Dendritic cell treated with granulocyte-macrophage colony-stimulating factor and Interleukin-4, amounts not matched to agents 40 ng/mL and 50 ng/mL, for 4 days (primary cell): ENCODE measurements at regions of chrX and their contacts with region 1.

Region 1: GRCh38 chrX:49269010-49269767 is 404 bp upstream of the PPP1R3F start:
- H3K4me3 Mint-ChIP-seq: peak overlapping the region; percentile 83
- H3K27ac Mint-ChIP-seq: peak overlapping the region; percentile 99
- H3K4me1 Mint-ChIP-seq: peaks cover 40% of the 10 kb centered on the region
- H3K27me3 Mint-ChIP-seq: no peaks in the 10 kb centered on the region

Region 2: DNA sequence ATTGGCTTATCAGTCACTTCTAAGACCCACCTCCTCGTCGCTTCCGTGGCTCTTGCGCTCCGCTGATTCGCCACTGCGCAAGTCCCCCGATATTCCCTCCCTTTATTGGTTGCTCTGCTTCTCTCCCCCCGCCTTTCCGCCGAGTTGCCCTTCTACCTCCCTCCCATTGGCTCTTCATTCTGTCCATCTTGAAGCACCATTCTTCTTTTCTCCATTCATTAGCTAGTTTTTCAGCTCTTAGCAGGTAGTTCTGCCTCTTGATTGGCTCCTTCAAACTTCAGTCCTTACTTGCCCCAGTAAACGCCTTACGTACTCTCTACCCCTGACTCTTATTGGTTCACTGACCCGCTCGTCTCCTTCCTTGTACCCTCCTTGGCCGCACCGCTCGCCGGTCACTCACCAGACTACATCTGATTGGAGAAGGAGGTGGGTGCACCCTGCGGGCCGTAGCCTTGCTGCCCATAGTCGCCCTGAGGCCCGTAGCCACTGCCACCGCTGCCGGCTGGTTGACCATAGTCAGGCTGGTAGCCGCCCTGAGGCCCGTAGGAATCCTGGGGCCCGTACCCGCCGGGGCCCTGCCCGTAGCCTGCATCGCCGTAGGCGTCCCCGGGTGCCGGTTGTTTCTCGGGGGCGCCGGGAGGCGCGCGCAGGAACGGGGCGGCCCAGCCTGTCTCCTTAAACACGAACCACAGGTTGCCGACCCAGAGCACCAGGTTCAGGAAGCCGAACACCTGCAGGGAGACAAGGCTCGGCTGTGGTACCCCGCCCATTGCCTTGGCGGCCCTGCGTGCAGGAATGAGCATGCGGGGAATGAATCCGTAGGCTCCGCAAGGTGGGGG is 77.9 kb before region 1 on chrX:
- intact Hi-C with region 1: loop called (anchors 2 kb)
- H3K4me3 Mint-ChIP-seq: peak overlapping the region; percentile 78
- H3K27ac Mint-ChIP-seq: peak overlapping the region; percentile 94
- H3K4me1 Mint-ChIP-seq: peaks cover 59% of the 10 kb centered on the region
- H3K27me3 Mint-ChIP-seq: no peaks in the 10 kb centered on the region

Region 3: DNA sequence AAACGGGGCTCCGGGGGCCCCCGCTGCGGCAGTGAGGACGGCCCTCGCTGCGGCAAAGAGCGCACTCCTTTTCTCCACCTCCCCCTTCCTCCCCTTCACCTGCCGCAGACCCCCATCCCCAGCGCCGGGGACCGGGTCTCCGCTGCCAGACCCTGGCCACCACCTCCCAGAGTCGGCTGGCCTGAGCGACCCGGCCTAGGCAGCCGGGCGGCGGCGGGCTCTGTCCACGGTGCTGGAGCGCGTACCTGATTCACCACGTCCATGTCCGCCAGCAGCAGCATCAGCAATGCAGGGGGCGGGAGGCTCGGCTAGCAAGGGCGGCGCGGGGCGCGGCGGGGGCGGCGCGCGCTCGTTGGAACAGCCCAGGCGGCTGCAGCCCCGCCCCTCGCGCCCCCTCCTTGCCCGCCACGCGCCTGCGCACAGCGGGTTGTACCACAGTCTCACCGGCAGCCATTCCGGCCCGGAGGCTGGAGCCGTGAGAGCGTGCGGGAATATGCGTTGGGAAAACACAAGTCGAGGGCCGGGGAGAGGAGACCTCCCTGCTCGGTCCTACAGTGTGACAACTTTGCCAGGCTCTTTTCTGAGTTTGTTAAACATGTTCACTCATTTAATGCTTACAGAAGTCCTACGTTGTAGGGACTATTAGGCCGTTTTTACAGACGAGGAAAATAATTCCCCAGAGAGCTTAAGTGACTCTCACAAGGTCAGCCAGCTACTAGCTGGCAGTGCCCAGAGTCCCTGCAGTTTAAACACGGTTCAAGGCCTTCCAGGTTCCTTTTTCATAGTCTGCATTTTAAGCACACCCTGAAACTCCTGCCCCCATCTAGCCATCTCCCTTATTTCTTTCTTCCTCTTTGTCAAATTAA is 69.0 kb before region 1 on chrX and contains the start of gene SYP:
- intact Hi-C with region 1: loop called (anchors 2 kb)
- H3K4me3 Mint-ChIP-seq: peak within 1 kb of the TSS; percentile 51
- H3K27ac Mint-ChIP-seq: peak within 1 kb of the TSS; percentile 69
- H3K4me1 Mint-ChIP-seq: peaks cover 20% of the 10 kb centered on the region
- H3K27me3 Mint-ChIP-seq: peaks cover 22% of the 10 kb centered on the region

Region 4: GRCh38 chrX:49230469-49231232 is 38.5 kb before region 1 on chrX:
- intact Hi-C with region 1: loop called (anchors 2 kb)
- H3K4me3 Mint-ChIP-seq: peak overlapping the region; percentile 72
- H3K27ac Mint-ChIP-seq: peak overlapping the region; percentile 87
- H3K4me1 Mint-ChIP-seq: peaks cover 24% of the 10 kb centered on the region
- H3K27me3 Mint-ChIP-seq: peaks cover 13% of the 10 kb centered on the region